ENCODE measurements at regions of chr5 and their contacts with region 1.

Region 1: DNA sequence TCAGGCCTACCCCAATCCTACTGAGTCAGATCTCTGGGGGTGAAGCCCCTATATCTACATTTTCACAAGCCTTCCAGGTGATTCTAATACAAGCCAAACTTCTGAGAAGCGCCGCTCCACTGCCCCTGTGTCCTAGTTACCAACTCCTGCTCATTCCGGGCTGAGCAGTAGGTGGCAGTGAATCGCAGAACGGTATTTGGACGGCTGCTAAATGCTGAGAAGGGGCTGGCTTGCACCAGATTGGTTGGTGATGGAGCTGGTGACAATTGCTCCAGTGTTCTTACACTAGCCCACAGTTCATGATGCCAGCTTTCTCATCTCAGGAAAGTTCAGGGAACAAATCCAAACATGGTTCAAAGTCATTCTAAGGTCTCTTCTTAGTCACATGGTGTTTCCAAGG is 31.1 kb upstream of the FGF1 start:
- DNase-seq: peak; percentile 62
- ATAC-seq: peak; percentile 56 to 69

Region 2: GRCh38 chr5:142548739-142549275 is 168.2 kb before region 1 on chr5:
- intact Hi-C with region 1: no loop called
- DNase-seq: peak; percentile 53
- ATAC-seq: peak; percentile 90 to 92

Region 3: GRCh38 chr5:142758056-142758795 is 41.3 kb after region 1 on chr5:
- intact Hi-C with region 1: loop called in 1 of 2 experiments (anchors 5 kb)
- DNase-seq: no peak
- ATAC-seq: peak in 1 of 2 donors; percentile 68

Region 4: DNA sequence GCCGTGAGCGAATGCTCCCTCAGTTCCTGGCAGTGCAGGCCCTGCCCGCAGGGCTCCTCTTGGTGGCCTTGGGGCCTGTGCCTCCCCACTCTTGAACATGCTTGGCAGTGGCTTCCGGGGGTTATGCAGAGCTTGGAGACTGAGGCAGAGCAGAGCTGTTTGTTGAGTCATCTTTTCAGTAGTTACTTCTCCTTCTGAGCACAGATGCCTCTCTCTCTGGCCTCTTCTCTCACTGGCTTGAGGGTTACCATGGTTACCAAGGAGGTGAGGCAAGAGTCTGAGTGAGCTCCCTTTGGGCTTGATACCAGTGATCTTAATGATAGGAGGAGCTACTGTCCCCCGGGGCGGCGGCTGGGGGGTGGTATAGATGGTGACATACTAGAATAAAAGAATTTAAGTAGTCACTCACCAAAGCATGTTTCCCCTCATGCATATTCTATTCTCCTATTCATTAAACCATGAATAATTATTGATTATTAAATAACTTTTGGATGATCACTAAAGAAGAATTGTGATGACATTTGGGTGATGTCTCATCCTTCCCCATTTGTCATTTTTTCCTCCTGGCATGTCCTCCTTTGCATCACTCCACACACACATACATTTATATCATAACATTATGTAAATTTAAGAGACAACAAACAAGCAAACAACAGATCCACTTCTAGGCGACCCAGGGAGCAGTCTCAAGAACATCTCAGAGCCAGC is 164.3 kb after region 1 on chr5:
- intact Hi-C with region 1: loop called (anchors 2 kb)
- DNase-seq: no peak
- ATAC-seq: peak in 1 of 2 donors; percentile 34

Region 5: GRCh38 chr5:142888469-142889085 is 171.6 kb after region 1 on chr5:
- intact Hi-C with region 1: loop called in 1 of 2 experiments (anchors 2 kb)
- DNase-seq: no peak
- ATAC-seq: peak; percentile 61 to 65

Measured in left cardiac atrium (tissue), 4 donors.